Naive thymus-derived CD4-positive, alpha-beta T cell (primary cell): ENCODE measurements at regions of chr22 and their contacts with region 1.

Region 1: DNA sequence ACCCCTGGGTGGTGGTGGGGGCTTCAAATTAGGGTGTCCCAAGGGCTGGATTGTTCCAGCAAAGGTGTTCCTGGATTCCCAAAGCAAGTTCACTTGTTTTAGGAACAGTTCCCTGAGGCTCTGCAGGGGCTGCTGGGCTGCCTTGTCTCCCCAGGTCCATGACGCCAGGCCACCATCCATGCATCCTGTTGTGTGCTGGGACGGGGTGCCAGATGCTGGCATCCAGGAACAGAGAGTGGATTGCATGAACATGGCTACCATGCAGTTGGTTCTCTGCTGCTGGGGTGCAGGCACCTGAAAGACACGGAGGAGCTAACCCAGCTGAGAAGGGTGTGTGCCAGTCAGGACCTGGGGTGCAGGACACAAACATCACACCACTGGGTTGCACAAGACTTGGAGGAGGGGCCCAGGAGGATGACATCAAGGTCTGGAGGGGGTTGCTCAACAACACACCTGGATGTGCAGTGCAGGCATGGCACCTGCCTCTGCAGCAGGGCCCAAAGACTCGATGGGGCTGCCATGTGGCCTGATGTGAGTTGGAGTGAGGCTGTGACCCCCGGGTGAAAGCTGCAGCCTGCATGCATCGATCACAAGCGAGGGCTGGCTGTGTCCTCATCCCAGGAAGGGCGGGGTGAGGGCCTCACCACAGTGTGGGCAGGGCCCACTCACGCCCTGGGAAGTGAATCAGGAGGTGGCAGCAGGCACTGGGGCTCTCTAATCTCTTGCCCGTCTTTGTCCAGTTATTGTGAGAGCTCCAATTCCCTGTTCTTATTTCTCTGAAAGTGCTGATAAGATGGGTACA is 74.0 kb upstream of the CLDN5 start:
- DNase-seq: peak in 7 of 9 donors; percentile 20 to 57 (median 38)
- ATAC-seq: no peak
- H3K4me3 ChIP-seq: peak overlapping the region; percentile 25
- H3K4me3 Mint-ChIP-seq: peak overlapping the region; percentile 61 to 88 (median 76)
- H3K27ac ChIP-seq: peak overlapping the region; percentile 75
- H3K27ac Mint-ChIP-seq: peak overlapping the region; percentile 83 to 100 (median 97)
- H3K4me1 ChIP-seq: peaks cover 11 to 63% of the 10 kb centered on the region in 2 donors
- H3K4me1 Mint-ChIP-seq: peaks cover 40 to 95% (median 79%) of the 10 kb centered on the region in 7 donors
- H3K27me3 ChIP-seq: no peaks in the 10 kb centered on the region
- H3K27me3 Mint-ChIP-seq: no peaks in the 10 kb centered on the region

Region 2: GRCh38 chr22:19143967-19144400 is 454.3 kb before region 1 on chr22:
- CTCF ChIA-PET with region 1: no interaction called
- POLR2A ChIA-PET with region 1: interaction called, 3 read pairs
- intact Hi-C with region 1: loop called in 1 of 2 experiments (anchors 10 kb)
- DNase-seq: peak in 6 of 9 donors; percentile 8 to 40 (median 26)
- ATAC-seq: no peak
- H3K4me3 ChIP-seq: peak overlapping the region; percentile 83
- H3K4me3 Mint-ChIP-seq: peak overlapping the region; percentile 84 to 99 (median 98)
- H3K27ac ChIP-seq: peak overlapping the region; percentile 93
- H3K27ac Mint-ChIP-seq: peak overlapping the region; percentile 91 to 99 (median 97)
- H3K4me1 ChIP-seq: no peaks in the 10 kb centered on the region
- H3K4me1 Mint-ChIP-seq: peaks cover 8 to 32% (median 18%) of the 10 kb centered on the region in 7 donors
- H3K27me3 ChIP-seq: peaks cover 0 to 1% of the 10 kb centered on the region in 2 donors
- H3K27me3 Mint-ChIP-seq: peaks cover 9 to 33% (median 11%) of the 10 kb centered on the region in 5 donors

Region 3: GRCh38 chr22:19432133-19432851 is 166.0 kb before region 1 on chr22 and contains the start of gene MRPL40:
- CTCF ChIA-PET with region 1: no interaction called
- POLR2A ChIA-PET with region 1: interaction called, 9 read pairs
- intact Hi-C with region 1: loop called in 1 of 2 experiments (anchors 2 kb)
- DNase-seq: peak; percentile 70 to 92 (median 84)
- ATAC-seq: peak; percentile 90
- H3K4me3 ChIP-seq: peak within 1 kb of the TSS; percentile 97
- H3K4me3 Mint-ChIP-seq: peak within 1 kb of the TSS; percentile 82 to 94 (median 91)
- H3K27ac ChIP-seq: peak within 1 kb of the TSS; percentile 80
- H3K27ac Mint-ChIP-seq: peak within 1 kb of the TSS; percentile 80 to 97 (median 91)
- H3K4me1 ChIP-seq: peaks cover 16 to 23% of the 10 kb centered on the region in 2 donors
- H3K4me1 Mint-ChIP-seq: peaks cover 27 to 50% (median 40%) of the 10 kb centered on the region in 7 donors
- H3K27me3 ChIP-seq: no peaks in the 10 kb centered on the region
- H3K27me3 Mint-ChIP-seq: no peaks in the 10 kb centered on the region
- total RNA-seq, gene MRPL40: 11.5 to 21.2 (median 17.0) TPM

Region 4: GRCh38 chr22:19479357-19480172 is 118.7 kb before region 1 on chr22 and contains the start of gene CDC45:
- CTCF ChIA-PET with region 1: interaction called, 3 read pairs
- POLR2A ChIA-PET with region 1: interaction called, 6 read pairs
- intact Hi-C with region 1: loop called in 1 of 2 experiments (anchors 1 kb)
- DNase-seq: peak; percentile 75 to 96 (median 93)
- ATAC-seq: peak; percentile 94
- H3K4me3 ChIP-seq: peak within 1 kb of the TSS; percentile 85
- H3K4me3 Mint-ChIP-seq: peak within 1 kb of the TSS; percentile 87 to 98 (median 92)
- H3K27ac ChIP-seq: peak within 1 kb of the TSS; percentile 96
- H3K27ac Mint-ChIP-seq: peak within 1 kb of the TSS; percentile 98 to 100 (median 99)
- H3K4me1 ChIP-seq: peaks cover 17 to 19% of the 10 kb centered on the region in 2 donors
- H3K4me1 Mint-ChIP-seq: peaks cover 24 to 43% (median 33%) of the 10 kb centered on the region in 7 donors
- H3K27me3 ChIP-seq: no peaks in the 10 kb centered on the region
- H3K27me3 Mint-ChIP-seq: no peaks in the 10 kb centered on the region
- total RNA-seq, gene CDC45: 0.35 to 57.7 (median 0.85) TPM

Region 5: GRCh38 chr22:19576460-19577421 is 21.5 kb before region 1 on chr22:
- CTCF ChIA-PET with region 1: no interaction called
- POLR2A ChIA-PET with region 1: interaction called, 16 read pairs
- intact Hi-C with region 1: loop called (anchors 1 to 2 kb)
- DNase-seq: peak in 4 of 9 donors; percentile 6 to 73 (median 12)
- ATAC-seq: peak; percentile 83
- H3K4me3 ChIP-seq: no peak overlapping the region
- H3K4me3 Mint-ChIP-seq: peak overlapping the region in 5 of 10 donors; percentile 2 to 74 (median 31)
- H3K27ac ChIP-seq: no peak overlapping the region
- H3K27ac Mint-ChIP-seq: peak overlapping the region in 8 of 9 donors; percentile 15 to 92 (median 58)
- H3K4me1 ChIP-seq: peaks cover 9 to 37% of the 10 kb centered on the region in 2 donors
- H3K4me1 Mint-ChIP-seq: peaks cover 26 to 45% (median 42%) of the 10 kb centered on the region in 7 donors
- H3K27me3 ChIP-seq: no peaks in the 10 kb centered on the region
- H3K27me3 Mint-ChIP-seq: no peaks in the 10 kb centered on the region

Region 6: GRCh38 chr22:19800761-19801244 is 202.5 kb after region 1 on chr22:
- CTCF ChIA-PET with region 1: no interaction called
- POLR2A ChIA-PET with region 1: no interaction called
- intact Hi-C with region 1: no loop called
- DNase-seq: no peak
- ATAC-seq: no peak
- H3K4me3 ChIP-seq: no peak overlapping the region
- H3K4me3 Mint-ChIP-seq: no peak overlapping the region
- H3K27ac ChIP-seq: no peak overlapping the region
- H3K27ac Mint-ChIP-seq: no peak overlapping the region
- H3K4me1 ChIP-seq: peaks cover 0 to under 1% of the 10 kb centered on the region in 2 donors
- H3K4me1 Mint-ChIP-seq: peaks cover 0 to 9% (median 6%) of the 10 kb centered on the region in 7 donors
- H3K27me3 ChIP-seq: no peaks in the 10 kb centered on the region
- H3K27me3 Mint-ChIP-seq: no peaks in the 10 kb centered on the region

Region 7: GRCh38 chr22:19891317-19892256 is 293.3 kb after region 1 on chr22:
- CTCF ChIA-PET with region 1: no interaction called
- POLR2A ChIA-PET with region 1: no interaction called
- intact Hi-C with region 1: loop called in 1 of 2 experiments (anchors 5 kb)
- DNase-seq: peak; percentile 39 to 89 (median 86)
- ATAC-seq: peak; percentile 90
- H3K4me3 ChIP-seq: peak overlapping the region; percentile 67
- H3K4me3 Mint-ChIP-seq: peak overlapping the region; percentile 80 to 91 (median 86)
- H3K27ac ChIP-seq: peak overlapping the region; percentile 84
- H3K27ac Mint-ChIP-seq: peak overlapping the region; percentile 92 to 100 (median 99)
- H3K4me1 ChIP-seq: peaks cover 35 to 96% of the 10 kb centered on the region in 2 donors
- H3K4me1 Mint-ChIP-seq: peaks cover 37 to 96% (median 84%) of the 10 kb centered on the region in 7 donors
- H3K27me3 ChIP-seq: no peaks in the 10 kb centered on the region
- H3K27me3 Mint-ChIP-seq: no peaks in the 10 kb centered on the region